Activated CD8-positive, alpha-beta T cell treated with anti-CD3 and anti-CD28 coated beads for 36 hours (primary cell): ENCODE measurements at regions of chr6 and their contacts with region 1.

Region 1: GRCh38 chr6:85642774-85643536 is at the start of gene SYNCRIP:
- DNase-seq: peak; percentile 97
- ATAC-seq: peak; percentile 88
- H3K4me3 Mint-ChIP-seq: peak within 1 kb of the TSS; percentile 96
- H3K27ac Mint-ChIP-seq: peak within 1 kb of the TSS; percentile 99
- H3K4me1 Mint-ChIP-seq: peaks cover 36% of the 10 kb centered on the region
- H3K27me3 Mint-ChIP-seq: no peaks in the 10 kb centered on the region
- CTCF ChIP-seq: no peak
- total RNA-seq, gene SYNCRIP: 167 to 179 TPM

Region 2: GRCh38 chr6:85593438-85594196 is 49.3 kb before region 1 on chr6 and contains the start of gene SNX14:
- CTCF ChIA-PET with region 1: no interaction called
- POLR2A ChIA-PET with region 1: interaction called, 27 read pairs
- intact Hi-C with region 1: no loop called
- DNase-seq: peak; percentile 88
- ATAC-seq: peak; percentile 84
- H3K4me3 Mint-ChIP-seq: peak within 1 kb of the TSS; percentile 99
- H3K27ac Mint-ChIP-seq: peak within 1 kb of the TSS; percentile 97
- H3K4me1 Mint-ChIP-seq: peaks cover 43% of the 10 kb centered on the region
- H3K27me3 Mint-ChIP-seq: no peaks in the 10 kb centered on the region
- CTCF ChIP-seq: no peak
- total RNA-seq, gene SNX14: 53.9 to 54.1 TPM

Region 3: GRCh38 chr6:85628353-85628752 is 14.6 kb before region 1 on chr6:
- CTCF ChIA-PET with region 1: interaction called, 6 read pairs
- POLR2A ChIA-PET with region 1: interaction called, 138 read pairs
- intact Hi-C with region 1: no loop called
- DNase-seq: no peak
- ATAC-seq: no peak
- H3K4me3 Mint-ChIP-seq: no peak overlapping the region
- H3K27ac Mint-ChIP-seq: peak overlapping the region; percentile 30
- H3K4me1 Mint-ChIP-seq: peaks cover 61% of the 10 kb centered on the region
- H3K27me3 Mint-ChIP-seq: no peaks in the 10 kb centered on the region
- CTCF ChIP-seq: no peak